Activated CD4-positive, alpha-beta T cell treated with anti-CD3 and anti-CD28 coated beads, Interleukin-2, amount 10 ng/mL, durations not matched to agents 24 days and 14 days (primary cell): ENCODE measurements at regions of chr2 and their contacts with region 1.

Region 1: DNA sequence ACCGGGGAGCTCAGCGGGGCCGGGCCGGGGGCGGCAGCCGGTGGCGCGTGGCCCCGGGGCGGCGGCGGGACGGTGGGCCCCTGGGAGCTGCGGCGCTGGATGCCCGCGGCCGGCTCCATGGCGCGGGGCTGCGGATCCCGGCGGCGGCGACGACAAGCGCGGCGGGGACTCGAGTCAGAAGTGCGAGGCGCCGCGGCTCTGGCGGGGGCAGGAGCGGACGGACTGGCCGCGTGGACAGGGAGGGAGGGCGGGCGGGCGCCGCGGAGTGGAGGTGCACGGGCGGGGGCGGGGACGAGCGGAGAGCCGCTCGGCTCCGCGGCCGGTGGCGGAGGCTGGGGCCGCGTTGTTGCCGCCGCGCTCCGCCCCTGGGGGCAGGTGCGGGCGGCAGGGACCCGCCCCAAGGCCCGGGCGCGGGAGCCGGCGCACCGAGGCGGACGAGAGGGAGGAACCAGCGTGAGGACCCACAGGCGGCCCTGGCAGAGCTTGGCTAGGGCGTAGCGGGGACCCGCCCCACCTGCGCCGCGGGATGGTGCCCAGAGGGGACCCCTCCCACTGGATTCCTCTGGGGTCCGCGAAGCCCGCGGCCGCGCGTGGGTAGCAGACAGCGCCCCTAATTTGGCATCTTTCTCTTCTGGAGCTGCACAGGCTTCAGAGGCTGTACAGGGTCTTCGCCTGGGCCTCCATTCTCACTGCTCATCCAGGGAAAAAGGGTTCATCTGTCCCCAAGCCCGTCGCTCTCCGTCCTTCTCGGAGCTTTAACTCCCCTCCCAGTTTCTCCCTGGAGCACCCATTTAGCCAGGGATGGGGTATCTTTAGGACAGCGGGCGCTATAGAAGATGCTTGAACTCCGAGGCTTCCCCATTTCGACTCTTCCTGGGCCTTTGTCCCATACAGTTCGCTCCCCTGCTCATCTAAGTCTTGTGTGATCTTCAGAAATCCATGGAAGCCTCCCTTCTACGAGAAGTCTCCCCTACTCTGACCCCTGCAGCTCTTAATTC is at the start of gene TMEM163:
- DNase-seq: peak; percentile 76
- H3K4me3 Mint-ChIP-seq: peak within 1 kb of the TSS; percentile 71
- H3K27ac Mint-ChIP-seq: peak within 1 kb of the TSS; percentile 19
- H3K4me1 Mint-ChIP-seq: peaks cover 9% of the 10 kb centered on the region
- H3K27me3 Mint-ChIP-seq: peaks cover 75% of the 10 kb centered on the region
- total RNA-seq, gene TMEM163: 0.23 TPM in 1 of 2 replicates, not detected in the other

Region 2: GRCh38 chr2:134527381-134527780 is 191.7 kb before region 1 on chr2:
- intact Hi-C with region 1: no loop called
- DNase-seq: no peak
- H3K4me3 Mint-ChIP-seq: no peak overlapping the region
- H3K27ac Mint-ChIP-seq: no peak overlapping the region
- H3K4me1 Mint-ChIP-seq: no peaks in the 10 kb centered on the region
- H3K27me3 Mint-ChIP-seq: peaks cover 2% of the 10 kb centered on the region

Region 3: DNA sequence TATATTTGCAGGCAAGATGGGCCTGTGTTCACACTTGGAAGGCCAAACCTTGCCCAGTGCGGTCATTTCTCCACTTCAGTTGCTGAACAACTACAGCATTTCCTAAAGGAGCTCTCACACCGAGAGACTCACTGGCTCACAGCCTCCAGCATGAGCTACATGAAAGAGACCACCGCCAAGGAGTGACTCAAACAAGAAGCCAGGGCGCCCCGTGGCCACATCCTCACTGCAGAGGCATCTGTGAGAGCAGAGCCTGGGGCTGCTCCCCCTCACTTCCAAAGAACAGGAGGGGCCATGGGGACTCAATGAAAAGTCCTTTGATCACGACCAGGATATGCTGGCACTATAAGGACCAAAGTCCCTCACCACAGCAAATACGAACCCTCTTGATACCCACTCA is 50.3 kb before region 1 on chr2:
- intact Hi-C with region 1: loop called (anchors 2 kb)
- DNase-seq: peak; percentile 94
- H3K4me3 Mint-ChIP-seq: peak overlapping the region; percentile 61
- H3K27ac Mint-ChIP-seq: peak overlapping the region; percentile 46
- H3K4me1 Mint-ChIP-seq: peaks cover 62% of the 10 kb centered on the region
- H3K27me3 Mint-ChIP-seq: peaks cover 40% of the 10 kb centered on the region

Region 4: DNA sequence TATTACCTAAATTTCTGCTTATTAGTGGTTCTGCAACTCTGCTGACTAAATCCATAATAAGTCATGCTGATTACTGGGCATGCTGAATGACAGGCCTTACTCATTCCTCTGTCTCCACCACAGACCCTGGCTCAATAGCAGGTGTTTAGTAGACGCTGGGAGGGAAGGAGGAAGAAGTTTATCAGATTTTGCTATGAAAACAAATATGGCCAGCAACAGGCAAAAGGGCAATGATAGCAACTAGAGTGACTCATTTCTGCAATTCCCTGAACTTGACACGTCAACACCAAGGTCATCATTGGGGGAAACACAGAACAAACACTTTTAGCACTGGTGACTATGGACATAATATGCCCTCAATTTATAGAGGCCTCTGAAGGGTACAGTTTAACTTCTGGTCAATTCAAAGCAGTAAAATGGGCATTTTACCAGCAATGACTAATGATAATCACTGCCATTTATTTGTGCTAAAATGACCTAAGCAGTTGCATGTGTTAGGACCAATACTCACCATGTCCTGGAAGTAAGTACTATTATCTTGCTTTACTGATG is 35.5 kb before region 1 on chr2:
- intact Hi-C with region 1: loop called (anchors 5 kb)
- DNase-seq: peak; percentile 65
- H3K4me3 Mint-ChIP-seq: no peak overlapping the region
- H3K27ac Mint-ChIP-seq: no peak overlapping the region
- H3K4me1 Mint-ChIP-seq: peaks cover 33% of the 10 kb centered on the region
- H3K27me3 Mint-ChIP-seq: peaks cover 12% of the 10 kb centered on the region

Region 5: GRCh38 chr2:134823419-134823818 is 104.3 kb after region 1 on chr2:
- intact Hi-C with region 1: no loop called
- DNase-seq: no peak
- H3K4me3 Mint-ChIP-seq: no peak overlapping the region
- H3K27ac Mint-ChIP-seq: no peak overlapping the region
- H3K4me1 Mint-ChIP-seq: no peaks in the 10 kb centered on the region
- H3K27me3 Mint-ChIP-seq: peaks cover 3% of the 10 kb centered on the region

Region 6: GRCh38 chr2:136362676-136363390 is 1643.7 kb after region 1 on chr2:
- intact Hi-C with region 1: no loop called
- DNase-seq: peak; percentile 75
- H3K4me3 Mint-ChIP-seq: peak overlapping the region; percentile 34
- H3K27ac Mint-ChIP-seq: peak overlapping the region; percentile 57
- H3K4me1 Mint-ChIP-seq: peaks cover 40% of the 10 kb centered on the region
- H3K27me3 Mint-ChIP-seq: no peaks in the 10 kb centered on the region